ENCODE measurements at regions of chr1 and their contacts with region 1.

Region 1: GRCh38 chr1:180881806-180882509 is 30.7 kb upstream of the KIAA1614 start:
- H3K4me3 Mint-ChIP-seq: no peak overlapping the region
- H3K27ac Mint-ChIP-seq: no peak overlapping the region
- H3K4me1 Mint-ChIP-seq: no peaks in the 10 kb centered on the region
- H3K27me3 Mint-ChIP-seq: no peaks in the 10 kb centered on the region

Region 2: DNA sequence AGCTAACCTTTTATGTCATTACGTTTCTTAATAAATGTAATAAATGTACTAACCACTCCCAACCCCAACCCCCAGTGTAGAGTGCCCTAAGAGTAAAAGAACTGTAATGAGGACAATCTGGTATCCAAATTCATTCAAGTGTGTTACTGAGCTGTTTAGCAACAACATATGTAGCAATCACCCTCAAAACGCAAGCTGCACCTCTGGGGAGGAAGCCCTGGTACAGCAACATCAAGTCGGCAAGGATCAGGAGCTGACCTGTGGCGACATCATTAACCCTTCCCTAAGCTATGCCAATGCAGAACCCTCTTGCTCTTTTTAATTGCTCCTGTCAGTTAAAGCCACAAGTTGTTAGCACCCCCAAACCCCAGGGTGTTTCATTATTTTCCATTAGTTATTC is 93.6 kb after region 1 on chr1:
- intact Hi-C with region 1: loop called (anchors 10 kb)
- H3K4me3 Mint-ChIP-seq: no peak overlapping the region
- H3K27ac Mint-ChIP-seq: no peak overlapping the region
- H3K4me1 Mint-ChIP-seq: peaks cover 25% of the 10 kb centered on the region
- H3K27me3 Mint-ChIP-seq: peaks cover 3% of the 10 kb centered on the region

Measured in dendritic cell treated with granulocyte-macrophage colony-stimulating factor and Interleukin-4, amounts not matched to agents 40 ng/mL and 50 ng/mL, for 4 days (primary cell).